ENCODE measurements at regions of chr4 and their contacts with region 1.

Region 1: DNA sequence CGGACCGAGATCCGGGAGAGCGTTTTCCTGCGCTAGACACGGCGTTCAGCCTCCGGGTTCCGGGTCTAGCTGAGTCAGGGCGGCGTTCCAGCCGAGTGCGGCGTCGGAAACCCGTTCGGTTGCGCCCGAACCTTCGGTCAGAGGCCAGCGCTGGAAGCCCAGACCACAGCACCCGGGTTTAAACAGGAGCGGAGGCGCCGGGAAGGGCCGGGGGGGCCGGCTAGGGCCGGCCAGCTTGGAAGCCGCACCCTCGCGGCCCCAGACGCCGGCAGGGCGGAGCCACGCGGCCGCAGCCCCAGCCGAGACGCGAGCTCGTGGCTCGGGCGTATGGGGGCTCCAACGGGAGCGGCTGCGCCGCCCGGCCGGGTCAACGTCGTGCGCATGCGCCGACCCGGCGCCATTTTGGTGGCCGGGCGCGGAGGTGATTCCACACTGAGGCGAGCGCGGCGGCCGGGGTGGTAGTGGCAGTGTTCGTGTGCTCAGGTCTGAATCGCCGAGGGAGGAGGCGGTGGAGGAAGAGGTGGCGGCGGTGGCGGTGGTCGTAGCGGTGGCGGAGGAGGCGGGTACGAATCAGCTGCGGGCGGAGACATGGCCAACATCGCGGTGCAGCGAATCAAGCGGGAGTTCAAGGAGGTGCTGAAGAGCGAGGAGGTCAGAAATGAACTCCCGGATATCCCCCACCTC is at the start of gene UBE2K:
- DNase-seq: peak; percentile 70 to 83
- ATAC-seq: peak; percentile 81 to 84
- H3K4me3 ChIP-seq: peak within 1 kb of the TSS; percentile 59 to 93 (median 84)
- H3K27ac ChIP-seq: peak within 1 kb of the TSS; percentile 87 to 97 (median 96)
- H3K4me1 ChIP-seq: peaks cover 32 to 35% of the 10 kb centered on the region in 2 donors
- H3K27me3 ChIP-seq: no peaks in the 10 kb centered on the region
- CTCF ChIP-seq: no peak
- POLR2A ChIP-seq: peak; percentile 90 to 93
- total RNA-seq, gene UBE2K: 28.7 to 38.8 (median 32.1) TPM

Region 2: GRCh38 chr4:38663801-38664705 is 1033.8 kb before region 1 on chr4 and contains the start of gene KLF3:
- in situ Hi-C with region 1: no loop called
- intact Hi-C with region 1: loop called (anchors 10 kb)
- DNase-seq: peak; percentile 88 to 92
- ATAC-seq: peak; percentile 65 to 70
- H3K4me3 ChIP-seq: peak within 1 kb of the TSS; percentile 94 to 99 (median 98)
- H3K27ac ChIP-seq: peak within 1 kb of the TSS; percentile 97 to 100 (median 98)
- H3K4me1 ChIP-seq: peaks cover 38 to 44% of the 10 kb centered on the region in 2 donors
- H3K27me3 ChIP-seq: no peaks in the 10 kb centered on the region
- CTCF ChIP-seq: no peak
- POLR2A ChIP-seq: peak; percentile 93 to 95
- total RNA-seq, gene KLF3: 12.7 to 26.5 (median 19.4) TPM

Region 3: DNA sequence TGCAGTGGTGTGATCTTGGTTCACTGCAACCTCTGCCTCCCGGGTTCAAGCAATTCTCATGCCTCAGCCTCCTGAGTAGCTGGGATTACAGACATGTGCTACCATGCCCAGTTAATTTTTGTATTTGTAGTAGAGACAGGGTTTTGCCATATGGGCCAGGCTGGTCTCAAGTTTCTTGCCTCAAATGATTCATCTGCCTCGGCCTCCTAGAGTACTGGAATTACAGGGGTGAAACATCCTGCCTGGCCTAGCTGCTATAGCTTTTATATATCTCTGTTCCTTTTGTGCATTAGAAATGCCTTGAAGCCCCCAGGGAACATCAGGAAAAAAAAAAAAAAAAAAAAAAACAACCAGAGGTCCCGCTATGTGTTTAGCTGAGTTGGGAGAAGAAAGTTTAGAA is 34.8 kb after region 1 on chr4:
- in situ Hi-C with region 1: no loop called
- intact Hi-C with region 1: loop called (anchors 5 kb)
- DNase-seq: peak; percentile 22 to 59
- ATAC-seq: peak; percentile 90 to 98
- H3K4me3 ChIP-seq: no peak overlapping the region
- H3K27ac ChIP-seq: peak overlapping the region; percentile 30 to 64 (median 46)
- H3K4me1 ChIP-seq: peaks cover 17 to 27% of the 10 kb centered on the region in 2 donors
- H3K27me3 ChIP-seq: no peaks in the 10 kb centered on the region
- CTCF ChIP-seq: no peak
- POLR2A ChIP-seq: no peak

Region 4: GRCh38 chr4:39823191-39823590 is 125.3 kb after region 1 on chr4:
- in situ Hi-C with region 1: no loop called
- intact Hi-C with region 1: loop called (anchors 5 kb)
- DNase-seq: no peak
- ATAC-seq: no peak
- H3K4me3 ChIP-seq: no peak overlapping the region
- H3K27ac ChIP-seq: no peak overlapping the region
- H3K4me1 ChIP-seq: no peaks in the 10 kb centered on the region
- H3K27me3 ChIP-seq: no peaks in the 10 kb centered on the region
- CTCF ChIP-seq: no peak
- POLR2A ChIP-seq: no peak

Region 5: GRCh38 chr4:39970671-39971640 is 273.1 kb after region 1 on chr4:
- in situ Hi-C with region 1: loop called (anchors 5 to 10 kb)
- intact Hi-C with region 1: no loop called
- DNase-seq: no peak
- ATAC-seq: no peak
- H3K4me3 ChIP-seq: no peak overlapping the region
- H3K27ac ChIP-seq: no peak overlapping the region
- H3K4me1 ChIP-seq: peaks cover 7 to 11% of the 10 kb centered on the region in 2 donors
- H3K27me3 ChIP-seq: no peaks in the 10 kb centered on the region
- CTCF ChIP-seq: no peak
- POLR2A ChIP-seq: no peak

Region 6: GRCh38 chr4:39977489-39978377 is 279.9 kb after region 1 on chr4 and contains the start of gene PDS5A:
- in situ Hi-C with region 1: loop called (anchors 5 to 10 kb)
- intact Hi-C with region 1: loop called (anchors 1 kb)
- DNase-seq: peak; percentile 73 to 86
- ATAC-seq: peak; percentile 90 to 91
- H3K4me3 ChIP-seq: peak within 1 kb of the TSS; percentile 74 to 96 (median 94)
- H3K27ac ChIP-seq: peak within 1 kb of the TSS; percentile 95 to 99 (median 98)
- H3K4me1 ChIP-seq: peaks cover 10 to 11% of the 10 kb centered on the region in 2 donors
- H3K27me3 ChIP-seq: no peaks in the 10 kb centered on the region
- CTCF ChIP-seq: peak; percentile 69 to 97 (median 97)
- POLR2A ChIP-seq: peak; percentile 92 to 94
- total RNA-seq, gene PDS5A: 28.3 to 40.6 (median 36.7) TPM